Colonic mucosa (tissue), 4 donors: ENCODE measurements at regions of chr12 and their contacts with region 1.

Region 1: DNA sequence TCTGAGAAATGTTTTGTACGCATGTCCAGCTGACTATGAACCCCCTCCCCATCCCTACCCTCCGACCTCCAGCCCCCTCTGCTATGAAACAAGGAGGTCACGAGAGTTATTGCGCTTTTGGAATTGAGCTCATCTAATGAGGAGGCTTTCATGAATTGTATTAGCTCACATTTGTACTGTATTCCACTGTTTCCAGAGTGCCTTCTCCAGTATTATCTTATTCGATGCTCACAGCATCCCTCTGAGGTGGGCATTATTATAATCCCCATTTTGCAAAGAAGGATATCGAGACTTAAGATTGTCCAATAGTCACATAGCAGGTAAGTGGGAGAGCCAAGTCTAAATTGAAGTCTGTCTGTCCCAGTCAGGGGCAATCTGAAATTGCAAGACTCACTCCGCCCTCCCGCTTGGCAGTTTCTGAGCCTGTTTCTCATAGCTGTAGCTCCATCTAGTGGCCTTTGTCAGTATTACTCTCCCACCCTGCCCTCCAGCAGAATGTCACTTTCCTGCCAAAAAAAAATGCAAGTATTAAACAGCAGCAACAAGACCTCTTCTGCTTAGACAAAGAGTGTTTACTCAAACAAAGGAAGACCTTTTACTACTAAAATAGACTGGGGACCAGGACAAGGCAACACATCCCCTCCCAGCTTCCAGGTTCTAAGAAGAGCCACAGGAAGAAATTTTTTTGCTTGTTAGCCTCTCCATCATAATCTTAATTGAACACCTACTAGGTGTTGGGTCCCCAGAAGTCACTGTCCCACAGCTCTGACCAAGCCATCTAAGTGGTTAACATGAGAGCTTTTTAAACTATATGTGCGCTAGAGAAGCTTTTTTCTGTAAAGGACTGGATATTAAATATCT is 48.6 kb upstream of the TMEM233 start:
- DNase-seq: peak; percentile 57
- H3K4me3 ChIP-seq: no peak overlapping the region
- H3K27ac ChIP-seq: no peak overlapping the region
- H3K4me1 ChIP-seq: no peaks in the 10 kb centered on the region
- H3K27me3 ChIP-seq: no peaks in the 10 kb centered on the region
- CTCF ChIP-seq: peak; percentile 83

Region 2: DNA sequence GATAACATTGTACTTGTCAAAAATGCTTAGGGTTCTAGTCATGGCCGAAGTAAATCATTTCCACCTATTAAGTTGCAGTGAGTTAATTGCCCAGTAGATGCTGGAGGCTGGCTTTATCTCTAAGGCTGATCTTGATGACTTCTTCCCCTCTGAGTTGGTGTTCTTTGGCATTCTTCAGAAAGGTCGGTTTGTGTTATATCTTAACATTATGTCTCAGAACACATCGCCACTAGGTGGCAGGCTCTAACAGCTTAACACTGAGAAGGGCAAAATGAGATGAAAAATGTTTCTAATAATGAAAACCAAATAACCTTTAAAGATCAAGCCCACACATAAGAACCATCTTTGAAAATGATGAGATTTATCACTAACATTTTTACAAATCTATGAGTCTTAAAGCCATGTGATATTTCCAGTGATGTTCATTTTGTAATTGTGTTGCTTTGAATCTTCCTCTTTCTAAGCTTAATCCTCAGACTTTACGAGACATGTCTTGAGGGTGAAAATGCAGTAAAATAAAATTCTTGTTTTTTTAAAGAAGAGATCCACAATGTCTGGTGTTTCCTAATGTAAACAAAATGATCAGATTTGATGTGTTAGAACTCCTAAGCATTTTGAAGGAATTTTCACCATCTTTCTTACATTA is 1140.0 kb before region 1 on chr12:
- intact Hi-C with region 1: loop called (anchors 10 kb)
- DNase-seq: peak; percentile 67
- H3K4me3 ChIP-seq: no peak overlapping the region
- H3K27ac ChIP-seq: no peak overlapping the region
- H3K4me1 ChIP-seq: no peaks in the 10 kb centered on the region
- H3K27me3 ChIP-seq: no peaks in the 10 kb centered on the region
- CTCF ChIP-seq: peak; percentile 71

Region 3: DNA sequence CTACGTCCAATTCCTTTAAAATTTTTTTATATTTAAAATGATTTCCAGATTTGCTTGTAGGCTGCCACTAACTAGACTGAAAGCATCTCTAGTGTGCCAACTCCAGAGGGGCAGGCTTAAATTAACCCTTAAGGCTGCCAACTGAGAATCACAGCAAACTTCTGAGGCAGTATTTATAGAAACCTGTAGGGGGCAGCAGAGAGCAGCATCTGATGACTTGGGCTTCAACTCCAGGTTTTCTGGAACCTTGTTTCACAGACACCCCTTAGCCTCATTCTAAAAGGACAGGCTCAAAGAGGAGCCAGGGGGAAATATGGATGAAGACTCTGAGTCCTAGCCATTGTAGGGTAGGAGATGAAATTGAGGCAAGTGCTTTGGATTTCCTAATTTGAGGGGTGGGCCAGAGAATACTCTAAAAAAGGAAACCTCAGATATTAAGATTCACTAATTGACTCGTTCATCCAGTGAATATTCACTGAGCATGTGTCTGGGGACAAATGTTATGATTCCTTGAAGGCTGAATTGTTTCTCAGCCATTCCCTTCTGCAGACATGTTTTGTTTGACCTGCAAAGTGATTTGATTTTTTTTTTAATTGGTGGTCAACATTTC is 429.6 kb before region 1 on chr12:
- intact Hi-C with region 1: loop called (anchors 10 kb)
- DNase-seq: peak; percentile 39
- H3K4me3 ChIP-seq: no peak overlapping the region
- H3K27ac ChIP-seq: no peak overlapping the region
- H3K4me1 ChIP-seq: no peaks in the 10 kb centered on the region
- H3K27me3 ChIP-seq: no peaks in the 10 kb centered on the region
- CTCF ChIP-seq: peak; percentile 87

Region 4: DNA sequence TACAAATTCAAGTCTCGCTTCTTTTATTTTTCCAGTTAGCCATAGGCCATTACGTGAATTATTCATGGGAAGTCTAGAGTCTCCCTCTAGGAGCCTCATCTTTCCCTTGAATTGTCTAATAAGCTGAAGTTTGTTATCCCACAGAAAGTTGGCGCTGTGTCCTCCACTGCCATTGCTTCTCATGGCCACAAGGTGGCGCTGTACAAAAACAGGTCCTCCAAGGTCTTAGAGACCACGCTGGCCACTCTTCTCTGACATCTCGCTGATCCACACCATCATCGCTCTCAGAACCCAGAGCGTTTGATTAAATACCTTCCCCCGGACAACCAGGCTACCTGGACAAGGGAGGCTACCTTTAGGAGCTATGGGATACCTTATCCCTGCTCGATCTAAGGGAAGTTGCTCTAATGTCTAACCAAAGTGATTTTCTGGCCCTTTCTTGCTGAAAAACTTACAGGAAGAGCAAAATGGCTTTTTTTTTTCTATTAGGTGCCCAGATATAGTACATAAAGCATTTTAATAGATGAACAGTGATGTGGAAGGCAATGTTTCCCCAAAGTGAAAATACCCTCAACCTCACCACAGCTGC is 100.4 kb before region 1 on chr12:
- intact Hi-C with region 1: loop called (anchors 10 kb)
- DNase-seq: peak; percentile 30
- H3K4me3 ChIP-seq: no peak overlapping the region
- H3K27ac ChIP-seq: no peak overlapping the region
- H3K4me1 ChIP-seq: no peaks in the 10 kb centered on the region
- H3K27me3 ChIP-seq: no peaks in the 10 kb centered on the region
- CTCF ChIP-seq: peak; percentile 80